ENCODE measurements at regions of chr3 and their contacts with region 1.

Region 1: DNA sequence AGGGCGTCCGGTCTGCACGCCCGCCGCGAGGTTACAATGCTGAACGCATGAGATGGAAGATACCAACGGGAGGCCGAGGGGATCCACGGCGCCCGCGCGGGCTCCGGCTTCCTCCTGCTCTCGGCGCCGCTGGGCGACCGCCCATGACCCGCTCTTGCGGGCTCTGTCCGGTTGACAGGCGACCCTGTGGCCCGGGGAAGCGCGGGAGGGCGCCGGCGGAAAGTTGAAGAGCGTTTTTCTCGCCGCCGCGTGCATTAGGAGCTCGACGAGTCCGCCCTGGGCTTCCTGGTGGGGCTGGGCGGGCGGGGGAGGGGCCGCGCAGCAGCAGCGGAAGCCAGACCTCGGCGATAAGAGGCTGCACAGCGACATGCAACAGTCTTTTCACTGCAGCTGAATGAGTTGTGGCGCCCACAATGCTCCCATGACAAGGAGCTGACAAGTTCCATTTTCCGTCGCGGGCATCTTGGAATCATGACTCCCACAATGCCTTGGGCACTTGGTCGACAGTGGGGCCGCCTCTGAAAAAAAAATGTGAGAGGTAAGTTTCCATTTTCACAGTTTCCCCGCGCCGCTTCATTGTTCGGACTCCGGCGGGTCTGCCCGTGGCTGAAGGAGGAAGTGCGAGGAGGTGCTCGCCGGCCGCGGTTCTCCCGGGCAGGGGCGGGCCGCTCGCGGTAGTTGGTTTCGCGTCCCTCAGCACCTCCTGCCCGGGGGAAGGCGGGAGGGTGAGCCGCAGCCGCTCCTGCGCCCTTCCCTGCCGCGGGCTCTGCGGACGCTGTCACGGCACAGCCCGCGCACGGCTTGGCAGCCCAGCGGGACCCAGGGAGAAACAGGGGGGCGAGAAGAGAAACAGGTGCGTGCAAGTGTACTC is at the start of gene MBNL1:
- DNase-seq: peak; percentile 86
- ATAC-seq: peak; percentile 73
- H3K4me3 Mint-ChIP-seq: peak within 1 kb of the TSS; percentile 99
- H3K27ac Mint-ChIP-seq: peak within 1 kb of the TSS; percentile 93
- H3K4me1 Mint-ChIP-seq: peaks cover 55% of the 10 kb centered on the region
- H3K27me3 Mint-ChIP-seq: no peaks in the 10 kb centered on the region
- total RNA-seq, gene MBNL1: 446 to 447 TPM

Region 2: DNA sequence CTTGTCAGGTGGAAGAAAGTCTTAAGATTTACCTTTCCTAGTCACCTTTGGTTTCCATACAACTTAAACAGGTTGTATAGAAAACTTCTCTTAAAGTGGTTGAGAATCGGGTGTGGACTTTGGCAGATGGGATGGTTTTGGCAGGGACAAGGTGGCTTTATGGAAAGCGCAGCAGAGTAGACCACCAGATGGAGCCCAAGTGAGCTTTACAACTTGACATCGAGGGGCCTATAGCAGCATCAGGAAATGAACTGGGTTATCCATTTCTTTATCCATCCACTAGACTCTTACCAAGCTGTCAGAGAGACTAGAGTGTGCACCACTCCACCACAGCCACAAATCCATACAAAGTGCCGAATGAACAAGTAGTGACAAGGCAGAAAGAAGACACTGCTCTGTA is 85.3 kb before region 1 on chr3:
- POLR2A ChIA-PET with region 1: interaction called, 24 read pairs
- DNase-seq: peak; percentile 39
- ATAC-seq: peak; percentile 90
- H3K4me3 Mint-ChIP-seq: peak overlapping the region; percentile 47
- H3K27ac Mint-ChIP-seq: peak overlapping the region; percentile 28
- H3K4me1 Mint-ChIP-seq: peaks cover 48% of the 10 kb centered on the region
- H3K27me3 Mint-ChIP-seq: no peaks in the 10 kb centered on the region

Region 3: GRCh38 chr3:152219216-152219615 is 49.6 kb before region 1 on chr3:
- POLR2A ChIA-PET with region 1: interaction called, 13 read pairs
- DNase-seq: no peak
- ATAC-seq: no peak
- H3K4me3 Mint-ChIP-seq: peak overlapping the region; percentile 83
- H3K27ac Mint-ChIP-seq: peak overlapping the region; percentile 15
- H3K4me1 Mint-ChIP-seq: peaks cover 55% of the 10 kb centered on the region
- H3K27me3 Mint-ChIP-seq: no peaks in the 10 kb centered on the region

Region 4: GRCh38 chr3:152229692-152230091 is 39.1 kb before region 1 on chr3:
- POLR2A ChIA-PET with region 1: no interaction called
- DNase-seq: no peak
- ATAC-seq: no peak
- H3K4me3 Mint-ChIP-seq: no peak overlapping the region
- H3K27ac Mint-ChIP-seq: no peak overlapping the region
- H3K4me1 Mint-ChIP-seq: peaks cover 40% of the 10 kb centered on the region
- H3K27me3 Mint-ChIP-seq: no peaks in the 10 kb centered on the region

Region 5: DNA sequence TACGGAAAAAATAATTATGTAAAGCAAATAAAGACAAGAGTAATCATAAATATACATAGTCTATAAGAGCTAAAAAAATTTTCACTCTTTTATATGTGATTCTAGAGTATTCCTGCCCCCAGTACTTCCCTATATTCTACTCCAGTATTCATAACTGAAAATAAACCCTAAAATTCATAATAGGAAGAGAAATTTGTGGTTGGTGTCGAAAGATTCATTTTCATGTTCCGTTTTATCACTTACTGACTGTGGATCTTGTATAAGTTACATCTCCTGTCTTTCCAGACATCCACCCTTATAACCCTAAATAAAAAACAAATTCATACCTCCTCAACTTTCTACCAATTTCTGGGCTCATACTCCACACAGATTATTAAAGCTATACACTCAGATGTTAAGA is 16.0 kb before region 1 on chr3:
- POLR2A ChIA-PET with region 1: interaction called, 258 read pairs
- DNase-seq: no peak
- ATAC-seq: no peak
- H3K4me3 Mint-ChIP-seq: peak overlapping the region; percentile 5
- H3K27ac Mint-ChIP-seq: peak overlapping the region; percentile 4
- H3K4me1 Mint-ChIP-seq: peaks cover 55% of the 10 kb centered on the region
- H3K27me3 Mint-ChIP-seq: no peaks in the 10 kb centered on the region

Region 6: DNA sequence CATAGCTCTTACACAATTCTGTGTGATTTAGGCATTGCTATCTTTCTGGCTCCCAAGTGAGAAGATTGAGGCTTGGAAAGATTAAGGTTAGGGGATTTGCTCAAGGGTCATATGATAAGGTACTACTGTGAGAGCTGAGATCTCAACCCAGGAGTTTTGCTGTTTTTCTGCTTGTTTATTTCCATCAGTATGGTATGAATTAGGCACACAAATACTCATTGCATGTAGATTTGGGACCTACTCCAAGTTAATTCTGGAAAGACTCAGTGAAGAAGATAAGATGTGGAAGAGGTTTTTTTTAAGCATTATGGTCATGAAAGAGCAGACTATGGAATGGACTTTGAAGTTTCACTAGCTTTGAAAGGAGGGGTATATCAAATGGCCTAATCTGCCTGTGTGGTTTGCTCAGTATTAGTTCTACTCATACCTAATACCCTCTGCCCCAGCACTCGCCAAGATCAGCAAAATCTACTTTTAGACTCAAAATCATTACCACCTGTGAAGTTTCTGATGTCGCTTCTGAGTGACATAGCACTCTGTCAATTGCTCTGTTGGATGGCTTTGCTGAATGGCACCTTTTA is 12.4 kb after region 1 on chr3:
- POLR2A ChIA-PET with region 1: interaction called, 26 read pairs
- DNase-seq: no peak
- ATAC-seq: no peak
- H3K4me3 Mint-ChIP-seq: peak overlapping the region; percentile 72
- H3K27ac Mint-ChIP-seq: peak overlapping the region; percentile 57
- H3K4me1 Mint-ChIP-seq: peaks cover 70% of the 10 kb centered on the region
- H3K27me3 Mint-ChIP-seq: no peaks in the 10 kb centered on the region

Region 7: GRCh38 chr3:152737021-152737908 is 468.5 kb after region 1 on chr3:
- POLR2A ChIA-PET with region 1: no interaction called
- DNase-seq: no peak
- ATAC-seq: peak; percentile 94
- H3K4me3 Mint-ChIP-seq: no peak overlapping the region
- H3K27ac Mint-ChIP-seq: no peak overlapping the region
- H3K4me1 Mint-ChIP-seq: peaks cover 14% of the 10 kb centered on the region
- H3K27me3 Mint-ChIP-seq: peaks cover 23% of the 10 kb centered on the region

Measured in activated naive CD8-positive, alpha-beta T cell treated with anti-CD3 and anti-CD28 coated beads, Interleukin-2, amount 10 ng/mL, durations not matched to agents 7 days and 5 days (primary cell).